Activated CD8-positive, alpha-beta T cell treated with anti-CD3 and anti-CD28 coated beads for 36 hours (primary cell): ENCODE measurements at regions of chr3 and their contacts with region 1.

Region 1: DNA sequence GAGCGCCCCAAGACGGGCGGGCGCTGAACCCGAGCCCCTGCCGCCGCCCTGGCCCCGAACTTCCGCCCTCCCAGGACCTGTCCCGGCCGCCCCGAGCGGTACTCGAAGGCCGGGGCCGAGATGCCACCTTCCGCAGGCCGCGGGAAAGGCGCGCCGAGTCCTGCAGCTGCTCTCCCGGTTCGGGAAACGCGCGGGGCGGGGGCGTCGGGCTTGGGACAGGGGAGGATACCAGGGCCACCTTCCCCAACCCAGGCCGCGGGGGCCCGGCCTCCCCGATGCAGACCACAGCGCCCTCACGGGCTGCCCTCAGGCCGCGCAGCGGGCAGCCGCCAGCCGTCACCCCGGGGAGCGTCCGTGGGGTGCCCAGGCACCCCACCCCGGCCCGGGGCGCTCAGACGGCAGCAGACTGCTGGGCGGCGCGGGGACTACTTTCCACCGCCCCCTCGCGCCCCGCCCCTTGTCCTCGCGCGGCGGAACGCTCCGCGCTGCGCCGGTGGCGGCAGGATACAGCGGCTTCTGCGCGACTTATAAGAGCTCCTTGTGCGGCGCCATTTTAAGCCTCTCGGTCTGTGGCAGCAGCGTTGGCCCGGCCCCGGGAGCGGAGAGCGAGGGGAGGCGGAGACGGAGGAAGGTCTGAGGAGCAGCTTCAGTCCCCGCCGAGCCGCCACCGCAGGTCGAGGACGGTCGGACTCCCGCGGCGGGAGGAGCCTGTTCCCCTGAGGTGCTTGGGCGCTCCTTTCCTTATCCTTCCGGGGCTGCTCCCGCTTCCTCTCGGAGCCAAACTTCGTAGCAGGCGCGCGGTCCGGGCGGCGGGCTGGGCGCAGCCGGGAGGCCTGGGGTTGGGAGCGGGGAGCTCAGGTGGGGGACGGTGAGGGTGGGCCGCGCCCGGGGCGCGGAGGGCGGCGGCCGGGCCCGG is at the start of gene CTNNB1:
- DNase-seq: peak; percentile 90
- ATAC-seq: peak; percentile 87
- H3K4me3 Mint-ChIP-seq: peak within 1 kb of the TSS; percentile 93
- H3K27ac Mint-ChIP-seq: peak within 1 kb of the TSS; percentile 89
- H3K4me1 Mint-ChIP-seq: peaks cover 31% of the 10 kb centered on the region
- H3K27me3 Mint-ChIP-seq: peaks cover 12% of the 10 kb centered on the region
- CTCF ChIP-seq: no peak
- total RNA-seq, gene CTNNB1: 99.9 to 104 TPM

Region 2: GRCh38 chr3:41213588-41213987 is 14.4 kb after region 1 on chr3:
- CTCF ChIA-PET with region 1: interaction called, 15 read pairs
- POLR2A ChIA-PET with region 1: interaction called, 60 read pairs
- intact Hi-C with region 1: no loop called
- DNase-seq: no peak
- ATAC-seq: no peak
- H3K4me3 Mint-ChIP-seq: no peak overlapping the region
- H3K27ac Mint-ChIP-seq: peak overlapping the region; percentile 50
- H3K4me1 Mint-ChIP-seq: peaks cover 78% of the 10 kb centered on the region
- H3K27me3 Mint-ChIP-seq: no peaks in the 10 kb centered on the region
- CTCF ChIP-seq: no peak

Region 3: GRCh38 chr3:41244620-41245336 is 45.6 kb after region 1 on chr3:
- CTCF ChIA-PET with region 1: no interaction called
- POLR2A ChIA-PET with region 1: interaction called, 14 read pairs
- intact Hi-C with region 1: no loop called
- DNase-seq: no peak
- ATAC-seq: no peak
- H3K4me3 Mint-ChIP-seq: no peak overlapping the region
- H3K27ac Mint-ChIP-seq: no peak overlapping the region
- H3K4me1 Mint-ChIP-seq: no peaks in the 10 kb centered on the region
- H3K27me3 Mint-ChIP-seq: no peaks in the 10 kb centered on the region
- CTCF ChIP-seq: no peak